B cell (primary cell): ENCODE measurements at regions of chr2 and their contacts with region 1.

Region 1: DNA sequence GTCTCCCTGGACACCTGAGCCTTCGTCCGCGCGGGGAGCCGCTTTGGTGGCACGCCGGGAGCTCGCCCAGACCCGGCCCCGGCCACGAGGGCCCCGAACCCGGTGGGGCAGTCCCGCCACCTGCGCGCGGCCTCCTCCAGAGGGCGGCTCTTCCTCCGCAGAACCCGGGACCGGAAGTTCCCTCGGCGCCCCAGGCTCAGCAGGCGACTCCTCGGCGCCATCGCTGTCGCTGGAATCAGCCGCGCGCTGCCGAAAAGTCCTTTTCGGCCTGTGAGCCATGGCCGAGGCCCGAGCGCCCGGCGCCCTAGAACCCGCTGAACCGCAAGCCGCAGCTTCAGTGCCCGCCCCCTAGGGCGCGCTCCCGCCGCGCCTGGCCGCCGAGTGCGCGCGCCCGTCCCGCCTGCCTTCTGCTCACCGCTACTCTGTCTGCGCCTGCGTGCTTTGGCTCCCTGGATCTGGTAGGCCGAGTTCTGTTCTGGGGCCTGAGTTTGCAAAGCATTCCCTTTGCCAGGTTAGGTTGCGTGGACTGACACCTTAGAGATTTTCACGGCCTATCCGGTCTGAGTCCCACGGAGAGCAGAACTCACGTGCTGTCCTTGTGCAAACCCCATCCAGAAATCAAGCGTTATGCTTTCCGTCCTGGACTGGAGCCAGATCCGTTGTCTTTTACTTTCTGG is at the start of gene GCFC2:
- DNase-seq: peak; percentile 91
- ATAC-seq: peak; percentile 90
- H3K4me3 ChIP-seq: peak within 1 kb of the TSS; percentile 65 to 72 (median 65)
- H3K4me3 Mint-ChIP-seq: peak within 1 kb of the TSS; percentile 87
- H3K27ac ChIP-seq: peak within 1 kb of the TSS; percentile 83 to 88
- H3K27ac Mint-ChIP-seq: peak within 1 kb of the TSS; percentile 86
- H3K4me1 ChIP-seq: peaks cover 5 to 14% of the 10 kb centered on the region in 2 donors
- H3K4me1 Mint-ChIP-seq: peaks cover 27% of the 10 kb centered on the region
- H3K27me3 ChIP-seq: no peaks in the 10 kb centered on the region
- H3K27me3 Mint-ChIP-seq: peaks cover 4% of the 10 kb centered on the region
- CTCF ChIP-seq: peak; percentile 51
- total RNA-seq, gene GCFC2: 19.7 and 20.4 TPM in 2 replicates

Region 2: DNA sequence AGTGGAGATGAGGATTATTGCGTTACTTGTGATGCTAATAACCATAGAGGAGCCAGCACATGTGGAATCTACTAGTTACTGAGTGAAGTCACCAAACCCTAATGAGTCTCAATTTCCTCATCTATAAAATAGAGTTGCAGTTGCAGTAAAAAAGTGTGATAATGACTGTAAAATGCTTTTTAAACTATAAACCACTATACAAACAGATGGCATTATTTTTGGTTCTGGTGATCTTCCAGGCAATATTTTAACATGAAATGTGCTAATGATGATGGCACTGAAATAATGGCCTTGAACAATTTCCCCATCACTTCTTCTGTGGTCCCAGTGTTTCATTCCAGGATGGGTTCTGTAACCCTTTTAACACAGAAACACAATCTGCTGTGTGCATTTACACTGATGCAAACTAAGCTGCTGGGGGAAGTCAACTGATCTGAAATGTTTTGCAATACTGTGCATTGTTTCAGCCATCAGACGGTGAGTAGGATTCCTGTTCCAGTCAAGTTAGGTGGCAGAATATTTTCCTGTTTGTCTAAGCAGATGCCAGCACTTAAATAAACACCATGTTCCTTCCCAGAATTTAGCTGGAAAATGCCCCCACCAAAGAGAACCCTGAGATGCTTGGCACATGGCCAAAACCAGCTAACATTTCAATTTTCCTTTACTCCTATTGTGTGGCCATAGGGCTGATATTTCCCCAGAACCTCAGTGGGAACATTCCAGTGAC is 563.9 kb before region 1 on chr2:
- CTCF ChIA-PET with region 1: no interaction called
- POLR2A ChIA-PET with region 1: interaction called, 13 read pairs
- intact Hi-C with region 1: no loop called
- DNase-seq: no peak
- ATAC-seq: no peak
- H3K4me3 ChIP-seq: no peak overlapping the region
- H3K4me3 Mint-ChIP-seq: no peak overlapping the region
- H3K27ac ChIP-seq: no peak overlapping the region
- H3K27ac Mint-ChIP-seq: no peak overlapping the region
- H3K4me1 ChIP-seq: peaks cover 7 to 11% of the 10 kb centered on the region in 2 donors
- H3K4me1 Mint-ChIP-seq: peaks cover 16% of the 10 kb centered on the region
- H3K27me3 ChIP-seq: no peaks in the 10 kb centered on the region
- H3K27me3 Mint-ChIP-seq: peaks cover 8% of the 10 kb centered on the region
- CTCF ChIP-seq: no peak

Region 3: DNA sequence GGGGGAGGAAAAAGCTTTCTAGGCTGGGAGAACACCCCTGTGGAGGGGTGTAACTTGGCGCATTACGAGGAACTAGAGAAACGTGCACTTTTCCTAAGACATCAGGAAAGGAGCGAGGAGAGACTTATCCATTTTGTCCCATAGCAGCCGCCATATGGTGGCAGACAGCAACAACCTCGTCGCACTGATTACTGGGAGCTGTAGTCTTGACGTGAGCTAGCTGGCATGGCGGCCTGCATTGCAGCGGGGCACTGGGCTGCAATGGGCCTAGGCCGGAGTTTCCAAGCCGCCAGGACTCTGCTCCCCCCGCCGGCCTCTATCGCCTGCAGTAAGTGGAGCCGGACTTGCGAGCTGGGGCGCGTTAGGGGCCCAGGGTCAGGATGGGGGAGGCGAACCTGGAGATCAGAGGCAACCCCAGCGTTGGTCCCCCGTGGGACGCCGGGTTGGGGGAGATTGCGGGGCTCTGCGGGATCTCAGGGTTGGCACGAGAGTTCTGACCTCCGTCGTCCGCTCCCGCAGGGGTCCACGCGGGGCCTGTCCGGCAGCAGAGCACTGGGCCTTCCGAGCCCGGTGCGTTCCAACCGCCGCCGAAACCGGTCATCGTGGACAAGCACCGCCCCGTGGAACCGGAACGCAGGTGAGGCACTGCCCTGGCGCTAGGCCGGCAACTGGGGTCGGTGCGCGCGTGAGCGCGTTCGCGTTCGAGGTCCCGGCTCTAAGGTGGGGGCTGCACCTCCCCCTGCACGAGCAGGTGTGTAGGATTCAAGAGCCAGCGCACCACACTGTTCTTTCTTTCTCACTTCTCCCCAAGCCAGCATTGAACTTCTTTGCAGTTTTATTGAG is 63.9 kb before region 1 on chr2 and contains the start of gene MRPL19:
- CTCF ChIA-PET with region 1: interaction called, 10 read pairs
- POLR2A ChIA-PET with region 1: no interaction called
- intact Hi-C with region 1: loop called (anchors 1 kb)
- DNase-seq: peak; percentile 86
- ATAC-seq: peak; percentile 96
- H3K4me3 ChIP-seq: peak within 1 kb of the TSS; percentile 68 to 95 (median 74)
- H3K4me3 Mint-ChIP-seq: peak within 1 kb of the TSS; percentile 97
- H3K27ac ChIP-seq: peak within 1 kb of the TSS; percentile 56 to 79
- H3K27ac Mint-ChIP-seq: peak within 1 kb of the TSS; percentile 94
- H3K4me1 ChIP-seq: peaks cover 7 to 12% of the 10 kb centered on the region in 2 donors
- H3K4me1 Mint-ChIP-seq: peaks cover 25% of the 10 kb centered on the region
- H3K27me3 ChIP-seq: no peaks in the 10 kb centered on the region
- H3K27me3 Mint-ChIP-seq: no peaks in the 10 kb centered on the region
- CTCF ChIP-seq: no peak
- total RNA-seq, gene MRPL19: 28.4 and 36.7 TPM in 2 replicates

Region 4: DNA sequence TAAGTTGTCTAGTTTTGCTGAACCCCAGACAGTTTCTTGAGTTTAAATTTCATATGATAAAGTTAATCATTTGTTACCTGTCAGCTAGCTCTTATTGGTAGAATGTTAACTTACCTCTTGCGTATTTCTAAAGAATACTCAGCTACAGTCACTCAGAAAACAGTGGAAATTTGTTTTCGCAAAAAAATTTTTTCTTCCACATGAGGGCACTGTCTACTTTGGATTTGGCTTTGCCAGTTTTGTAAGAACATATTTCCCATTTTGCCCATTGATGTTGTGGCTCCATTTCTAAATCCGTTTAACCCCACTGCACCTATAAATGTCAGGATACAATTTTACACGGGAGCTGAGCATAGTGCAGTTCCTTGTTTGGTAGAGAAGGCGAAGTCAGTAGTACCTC is 19.1 kb after region 1 on chr2:
- CTCF ChIA-PET with region 1: no interaction called
- POLR2A ChIA-PET with region 1: no interaction called
- intact Hi-C with region 1: no loop called
- DNase-seq: no peak
- ATAC-seq: no peak
- H3K4me3 ChIP-seq: no peak overlapping the region
- H3K4me3 Mint-ChIP-seq: no peak overlapping the region
- H3K27ac ChIP-seq: no peak overlapping the region
- H3K27ac Mint-ChIP-seq: no peak overlapping the region
- H3K4me1 ChIP-seq: no peaks in the 10 kb centered on the region
- H3K4me1 Mint-ChIP-seq: no peaks in the 10 kb centered on the region
- H3K27me3 ChIP-seq: peaks cover 0 to 10% (median 0%) of the 10 kb centered on the region in 4 experiments
- H3K27me3 Mint-ChIP-seq: peaks cover 23% of the 10 kb centered on the region
- CTCF ChIP-seq: no peak